SK-N-SH (cell line): ENCODE measurements at regions of chr2 and their contacts with region 1.

Region 1: DNA sequence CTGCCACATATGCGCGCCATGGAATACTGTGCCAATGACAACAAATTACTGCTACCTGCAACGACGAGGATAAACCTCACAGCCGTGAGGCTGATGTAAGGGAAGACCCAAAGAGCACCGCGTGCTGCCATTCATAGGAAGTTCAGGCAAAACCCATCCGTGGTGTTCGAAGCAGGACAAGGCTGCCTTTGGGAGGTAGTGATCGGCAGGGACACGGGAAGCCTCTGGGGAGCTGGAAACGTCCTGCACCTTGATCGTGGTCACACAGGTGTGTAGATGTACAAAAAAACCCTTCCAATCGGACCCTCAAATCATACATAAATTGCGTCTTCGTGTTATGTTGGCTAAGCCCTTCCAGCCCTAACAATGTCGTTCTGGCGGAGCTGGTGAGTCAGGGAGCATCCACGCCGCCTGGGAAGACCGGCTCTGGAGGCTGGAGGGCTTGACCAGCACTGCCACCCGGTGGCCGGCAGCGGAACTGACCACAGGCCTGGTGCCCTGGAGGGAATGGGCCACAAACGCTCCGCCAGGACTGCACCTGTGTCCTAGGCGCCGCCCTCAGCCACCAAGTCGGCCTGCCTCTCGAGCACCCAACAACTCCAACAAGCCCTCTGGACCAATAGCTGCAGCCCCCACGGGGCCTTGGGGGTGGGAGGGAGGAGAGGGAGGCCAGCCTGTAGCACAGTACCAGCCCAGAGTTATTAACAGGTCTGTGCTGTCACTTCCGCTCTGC is 4.1 kb upstream of the NEURL3 start:
- DNase-seq: peak; percentile 92
- H3K4me3 ChIP-seq: no peak overlapping the region; a peak in 1 of 4 replicates
- H3K27ac ChIP-seq: no peak overlapping the region
- H3K4me1 ChIP-seq: peaks cover 4 to 10% of the 10 kb centered on the region in 2 experiments; a peak in 1 of 4 replicates
- H3K27me3 ChIP-seq: peaks cover 16% of the 10 kb centered on the region; the same call in 1 of the 2 replicates
- CTCF ChIP-seq: peak; percentile 91
- EP300 ChIP-seq: no peak
- RAD21 ChIP-seq: peak; percentile 94

Region 2: DNA sequence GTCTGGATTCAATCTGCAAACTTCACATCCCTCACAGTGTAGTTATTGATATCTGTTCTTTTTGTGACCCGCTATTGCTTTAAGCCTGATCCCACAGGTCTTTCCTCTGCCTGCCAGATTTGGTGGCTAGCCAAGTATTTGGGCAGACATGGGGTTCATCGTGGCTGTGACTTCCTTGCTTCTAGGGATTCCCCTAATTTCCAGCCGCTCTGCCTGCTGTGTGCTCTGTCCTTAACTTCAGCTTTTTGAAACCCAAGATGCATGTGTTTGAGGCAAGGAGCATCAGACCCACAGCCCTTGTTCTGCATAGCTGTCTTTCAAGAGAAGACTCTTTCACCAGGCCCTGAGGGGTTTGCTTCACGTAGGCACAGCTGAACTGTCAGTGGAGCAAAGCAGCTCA is 119.5 kb before region 1 on chr2:
- CTCF ChIA-PET with region 1: interaction called, 13 read pairs
- POLR2A ChIA-PET with region 1: no interaction called
- DNase-seq: no peak
- H3K4me3 ChIP-seq: no peak overlapping the region
- H3K27ac ChIP-seq: no peak overlapping the region
- H3K4me1 ChIP-seq: no peaks in the 10 kb centered on the region
- H3K27me3 ChIP-seq: peaks cover 8% of the 10 kb centered on the region; the same call in 1 of the 2 replicates
- CTCF ChIP-seq: no peak
- EP300 ChIP-seq: no peak
- RAD21 ChIP-seq: no peak

Region 3: GRCh38 chr2:96413323-96413722 is 96.0 kb before region 1 on chr2:
- CTCF ChIA-PET with region 1: interaction called, 273 read pairs
- POLR2A ChIA-PET with region 1: no interaction called
- DNase-seq: no peak
- H3K4me3 ChIP-seq: peak overlapping the region; percentile 31 to 59; a peak in 3 of 4 replicates
- H3K27ac ChIP-seq: no peak overlapping the region
- H3K4me1 ChIP-seq: peaks cover 0 to 6% of the 10 kb centered on the region in 2 experiments; a peak in 1 of 4 replicates
- H3K27me3 ChIP-seq: no peaks in the 10 kb centered on the region; the same call in 1 of the 2 replicates
- CTCF ChIP-seq: no peak
- EP300 ChIP-seq: no peak
- RAD21 ChIP-seq: no peak

Region 4: DNA sequence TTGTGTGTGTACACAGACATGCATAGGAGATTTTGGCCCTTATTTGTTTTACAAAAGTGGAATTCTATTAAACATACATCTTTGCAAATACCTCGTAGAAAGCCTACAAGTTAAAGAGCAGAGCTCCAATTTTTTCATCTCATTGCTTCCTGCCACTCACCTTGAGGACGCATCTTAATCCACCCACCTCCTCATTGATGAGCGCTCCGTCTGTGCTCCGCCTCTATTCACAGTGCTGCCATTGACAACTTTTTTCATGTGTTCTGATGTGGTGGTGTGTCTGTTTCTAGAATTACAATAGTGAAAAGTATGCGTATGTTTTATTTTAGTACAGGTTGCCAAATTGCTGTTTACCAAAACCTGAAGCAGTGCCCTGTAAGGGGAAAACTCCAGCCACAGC is 40.4 kb before region 1 on chr2:
- CTCF ChIA-PET with region 1: interaction called, 13 read pairs
- POLR2A ChIA-PET with region 1: no interaction called
- DNase-seq: no peak
- H3K4me3 ChIP-seq: no peak overlapping the region
- H3K27ac ChIP-seq: no peak overlapping the region
- H3K4me1 ChIP-seq: no peaks in the 10 kb centered on the region
- H3K27me3 ChIP-seq: no peaks in the 10 kb centered on the region; the same call in 1 of the 2 replicates
- CTCF ChIP-seq: no peak
- EP300 ChIP-seq: no peak
- RAD21 ChIP-seq: no peak

Region 5: GRCh38 chr2:96527286-96528005 is 18.2 kb after region 1 on chr2:
- CTCF ChIA-PET with region 1: interaction called, 59 read pairs
- POLR2A ChIA-PET with region 1: no interaction called
- DNase-seq: peak; percentile 56
- H3K4me3 ChIP-seq: 0 out of 4 replicates have a peak overlapping the region, but pooled peaks of 1 of the 2 experiments have one; percentile 13
- H3K27ac ChIP-seq: no peak overlapping the region
- H3K4me1 ChIP-seq: peaks cover 11 to 12% of the 10 kb centered on the region in 2 experiments; a peak in 3 of 4 replicates
- H3K27me3 ChIP-seq: no peaks in the 10 kb centered on the region
- CTCF ChIP-seq: no peak
- EP300 ChIP-seq: no peak
- RAD21 ChIP-seq: no peak

Region 6: DNA sequence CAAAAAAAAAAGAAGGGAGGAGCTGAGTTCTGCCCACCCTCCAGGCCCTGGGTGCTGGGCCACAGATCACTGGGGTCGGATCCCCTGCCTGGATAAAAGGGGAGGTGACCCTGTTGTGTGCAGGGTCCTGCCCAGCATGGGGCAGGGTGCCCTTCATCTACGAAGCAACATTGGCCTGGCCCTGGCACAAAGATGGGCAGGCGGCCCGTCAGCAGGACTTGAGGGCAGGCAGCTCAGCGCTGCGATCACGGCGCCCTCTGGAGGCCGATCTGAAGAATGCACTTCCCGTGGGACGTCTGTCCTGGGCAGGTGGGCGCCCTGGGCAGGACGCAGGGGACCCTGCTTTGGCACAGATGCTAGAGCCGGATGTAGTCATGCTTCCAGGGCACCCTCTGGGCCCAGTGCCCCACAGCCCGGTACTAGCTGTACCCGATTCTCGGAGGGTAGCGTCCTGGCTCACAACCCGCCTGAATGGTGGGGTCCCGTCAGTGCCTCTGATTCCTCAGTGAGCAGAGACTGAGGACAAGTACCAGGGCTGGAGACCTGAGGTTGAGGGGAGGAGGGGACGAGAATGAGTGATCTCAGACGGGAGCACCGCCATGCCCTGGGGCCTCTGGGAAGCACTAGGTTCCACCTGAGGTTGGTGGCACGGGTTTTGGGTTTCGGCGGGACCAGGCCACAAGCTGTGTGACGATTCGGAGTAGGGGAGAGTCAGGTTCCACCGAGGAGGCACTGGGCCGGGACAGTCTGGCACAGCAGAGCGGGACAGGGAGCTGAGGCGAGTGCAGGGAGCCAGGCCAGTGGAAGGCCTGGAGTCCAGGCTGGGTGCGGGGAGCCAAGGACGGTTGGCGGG is 45.2 kb after region 1 on chr2:
- CTCF ChIA-PET with region 1: interaction called, 51 read pairs
- POLR2A ChIA-PET with region 1: no interaction called
- DNase-seq: peak; percentile 90
- H3K4me3 ChIP-seq: no peak overlapping the region; a peak in 1 of 4 replicates
- H3K27ac ChIP-seq: no peak overlapping the region
- H3K4me1 ChIP-seq: peaks cover 0 to 3% of the 10 kb centered on the region in 2 experiments; a peak in 1 of 4 replicates
- H3K27me3 ChIP-seq: no peaks in the 10 kb centered on the region
- CTCF ChIP-seq: peak; percentile 90
- EP300 ChIP-seq: no peak
- RAD21 ChIP-seq: peak; percentile 82